Posterior vena cava (tissue), 2 donors: ENCODE measurements at regions of chr1 and their contacts with region 1.

Region 1: GRCh38 chr1:9874959-9875635 is 35.0 kb downstream of the CTNNBIP1 start:
- DNase-seq: no peak

Region 2: GRCh38 chr1:8985915-8986813 is 888.9 kb before region 1 on chr1:
- intact Hi-C with region 1: no loop called
- DNase-seq: peak; percentile 92

Region 3: GRCh38 chr1:9929431-9930385 is 54.6 kb after region 1 on chr1:
- intact Hi-C with region 1: loop called in 1 of 2 experiments (anchors 10 kb)
- DNase-seq: no peak